ENCODE measurements at regions of chr11 and their contacts with region 1.

Region 1: DNA sequence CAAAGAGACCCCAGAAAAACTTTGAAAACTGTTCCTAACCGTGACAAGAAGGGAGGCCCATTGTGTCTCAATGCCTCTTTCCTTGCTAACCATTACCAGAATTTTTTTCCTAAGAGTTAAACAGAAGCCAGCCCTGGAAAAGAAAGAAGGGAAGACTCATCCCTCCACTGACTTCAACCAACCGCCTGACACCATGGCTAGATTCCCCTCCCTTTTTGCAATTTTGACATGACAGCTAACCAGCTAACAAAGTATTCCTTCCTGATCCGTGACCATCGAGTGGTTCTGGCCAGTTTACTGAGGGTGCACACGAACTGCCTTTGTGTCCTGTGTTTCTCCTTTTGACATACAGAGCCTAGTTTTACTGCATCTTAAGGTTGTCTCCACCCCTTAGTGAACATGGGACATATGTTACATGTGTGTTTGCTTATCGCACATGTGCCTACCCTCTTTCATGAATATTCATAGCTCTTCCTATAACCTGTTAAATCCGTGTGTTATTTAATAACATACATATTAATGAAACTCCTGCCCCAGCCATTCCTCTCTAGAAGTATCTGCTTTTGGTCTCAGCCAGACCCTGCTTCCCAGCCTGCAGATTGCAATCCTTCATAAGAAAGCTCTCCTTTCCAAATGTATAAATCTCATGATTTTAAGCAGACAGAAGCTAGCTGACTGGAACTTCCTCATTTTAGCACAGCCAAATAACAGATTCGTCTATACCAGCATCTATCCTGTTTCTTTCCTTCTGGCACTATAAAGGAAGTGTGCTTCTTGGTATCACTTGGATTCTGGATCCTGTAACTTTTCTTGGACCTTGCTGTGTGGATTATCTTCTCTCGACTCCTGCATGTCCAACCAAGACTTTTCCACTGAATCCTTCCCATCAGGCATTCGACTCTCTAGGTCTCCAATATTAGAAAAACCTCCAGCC is 37.8 kb downstream of the RASSF10 start:
- DNase-seq: no peak
- H3K4me3 ChIP-seq: no peak overlapping the region
- H3K27ac ChIP-seq: no peak overlapping the region
- H3K4me1 ChIP-seq: no peaks in the 10 kb centered on the region
- H3K27me3 ChIP-seq: no peaks in the 10 kb centered on the region
- CTCF ChIP-seq: no peak
- POLR2A ChIP-seq: no peak

Region 2: GRCh38 chr11:13073119-13073981 is 26.4 kb after region 1 on chr11:
- intact Hi-C with region 1: loop called (anchors 1 kb)
- DNase-seq: no peak
- H3K4me3 ChIP-seq: no peak overlapping the region
- H3K27ac ChIP-seq: no peak overlapping the region
- H3K4me1 ChIP-seq: no peaks in the 10 kb centered on the region
- H3K27me3 ChIP-seq: no peaks in the 10 kb centered on the region
- CTCF ChIP-seq: no peak
- POLR2A ChIP-seq: no peak

Region 3: DNA sequence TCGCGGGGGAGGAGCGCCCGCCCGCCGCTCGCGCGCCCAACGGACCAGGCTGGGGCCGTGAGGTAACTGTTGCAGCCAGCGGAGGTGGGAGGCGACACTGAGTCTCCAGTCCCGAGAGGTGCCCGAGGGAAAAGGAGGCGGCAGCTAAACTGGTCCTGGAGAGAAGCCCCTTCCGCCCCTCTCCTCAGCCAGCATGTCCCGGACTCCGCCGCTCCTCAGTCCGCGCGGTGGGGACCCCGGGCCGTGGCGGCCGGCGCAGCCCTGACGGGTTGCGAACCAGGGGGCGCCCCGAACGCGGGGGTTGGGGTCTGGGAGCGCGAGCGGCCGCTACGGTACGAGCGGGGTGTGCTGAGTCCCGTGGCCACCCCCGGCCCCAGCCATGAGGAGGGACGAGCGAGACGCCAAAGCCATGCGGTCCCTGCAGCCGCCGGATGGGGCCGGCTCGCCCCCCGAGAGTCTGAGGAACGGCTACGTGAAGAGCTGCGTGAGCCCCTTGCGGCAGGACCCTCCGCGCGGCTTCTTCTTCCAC is 1596.9 kb after region 1 on chr11 and contains the start of gene PDE3B:
- intact Hi-C with region 1: no loop called
- DNase-seq: peak in 1 of 2 donors; percentile 51
- H3K4me3 ChIP-seq: peak within 1 kb of the TSS; percentile 65 to 87 (median 74)
- H3K27ac ChIP-seq: no peak within 1 kb of the TSS
- H3K4me1 ChIP-seq: no peaks in the 10 kb centered on the region
- H3K27me3 ChIP-seq: peaks cover 0 to 39% of the 10 kb centered on the region in 2 donors
- CTCF ChIP-seq: no peak
- POLR2A ChIP-seq: no peak
- total RNA-seq, gene PDE3B: 14.1 to 177 (median 17.3) TPM

Measured in breast epithelium (tissue), 4 donors.